CD8-positive, alpha-beta memory T cell (primary cell): ENCODE measurements at regions of chr11 and their contacts with region 1.

Region 1: DNA sequence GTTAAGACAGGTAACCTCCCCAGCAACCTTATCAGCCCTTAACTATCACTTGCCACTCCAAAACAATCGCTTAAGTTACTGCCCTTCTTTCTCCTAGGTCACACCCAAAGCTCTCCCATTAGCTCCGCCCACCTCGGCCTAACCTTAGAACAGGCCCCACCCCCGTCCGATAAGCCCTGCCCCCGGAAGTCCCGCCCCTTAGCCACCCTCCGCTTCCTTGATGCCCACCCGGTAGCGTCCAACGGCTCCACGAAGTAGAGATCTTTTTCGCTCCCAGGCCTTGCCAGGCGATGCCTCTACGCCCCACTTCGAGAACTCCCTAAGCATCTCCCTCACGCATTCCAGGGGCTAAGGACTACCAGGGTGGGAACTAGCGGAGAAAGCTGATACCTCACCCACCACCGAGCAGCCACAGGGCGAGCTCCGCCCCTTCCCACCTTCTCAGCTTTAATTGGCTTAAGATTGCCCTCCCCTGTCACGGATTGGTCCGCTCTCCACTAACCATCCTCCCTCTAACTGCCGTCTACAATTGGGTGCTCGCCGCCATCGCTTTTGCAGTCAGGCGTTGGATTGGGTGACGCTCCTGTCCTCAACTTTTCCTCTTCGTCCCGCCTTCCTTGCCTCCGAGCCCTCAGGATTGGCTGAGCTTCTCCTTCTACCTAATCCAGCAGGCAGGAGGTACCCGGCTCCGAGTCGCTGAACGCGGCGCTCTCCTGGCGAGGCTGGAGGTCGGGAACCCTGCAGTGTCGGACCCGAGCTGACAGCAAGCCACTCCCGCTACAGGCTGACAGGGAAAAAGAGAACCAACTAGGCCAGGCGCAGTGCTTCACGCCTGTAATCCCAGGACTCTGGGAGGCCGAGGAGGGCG is at the start of gene ZBTB3:
- DNase-seq: peak; percentile 95 to 99 (median 98)
- H3K4me3 ChIP-seq: peak within 1 kb of the TSS; percentile 99
- H3K4me3 Mint-ChIP-seq: peak within 1 kb of the TSS; percentile 91 to 100 (median 99)
- H3K27ac ChIP-seq: peak within 1 kb of the TSS; percentile 91
- H3K27ac Mint-ChIP-seq: peak within 1 kb of the TSS; percentile 83 to 99 (median 98)
- H3K4me1 ChIP-seq: peaks cover 22% of the 10 kb centered on the region
- H3K4me1 Mint-ChIP-seq: peaks cover 24 to 40% (median 33%) of the 10 kb centered on the region in 3 donors
- H3K27me3 ChIP-seq: no peaks in the 10 kb centered on the region
- H3K27me3 Mint-ChIP-seq: no peaks in the 10 kb centered on the region
- total RNA-seq, gene ZBTB3: 9.4 to 11.6 TPM

Region 2: GRCh38 chr11:62705880-62706849 is 47.8 kb before region 1 on chr11:
- CTCF ChIA-PET with region 1: interaction called, 6 read pairs
- POLR2A ChIA-PET with region 1: interaction called, 21 read pairs
- DNase-seq: peak; percentile 92 to 98 (median 95)
- H3K4me3 ChIP-seq: peak overlapping the region; percentile 88
- H3K4me3 Mint-ChIP-seq: peak overlapping the region; percentile 86 to 95 (median 89)
- H3K27ac ChIP-seq: peak overlapping the region; percentile 95
- H3K27ac Mint-ChIP-seq: peak overlapping the region; percentile 92 to 99 (median 94)
- H3K4me1 ChIP-seq: peaks cover 48% of the 10 kb centered on the region
- H3K4me1 Mint-ChIP-seq: peaks cover 36 to 49% (median 41%) of the 10 kb centered on the region in 3 donors
- H3K27me3 ChIP-seq: no peaks in the 10 kb centered on the region
- H3K27me3 Mint-ChIP-seq: no peaks in the 10 kb centered on the region

Region 3: DNA sequence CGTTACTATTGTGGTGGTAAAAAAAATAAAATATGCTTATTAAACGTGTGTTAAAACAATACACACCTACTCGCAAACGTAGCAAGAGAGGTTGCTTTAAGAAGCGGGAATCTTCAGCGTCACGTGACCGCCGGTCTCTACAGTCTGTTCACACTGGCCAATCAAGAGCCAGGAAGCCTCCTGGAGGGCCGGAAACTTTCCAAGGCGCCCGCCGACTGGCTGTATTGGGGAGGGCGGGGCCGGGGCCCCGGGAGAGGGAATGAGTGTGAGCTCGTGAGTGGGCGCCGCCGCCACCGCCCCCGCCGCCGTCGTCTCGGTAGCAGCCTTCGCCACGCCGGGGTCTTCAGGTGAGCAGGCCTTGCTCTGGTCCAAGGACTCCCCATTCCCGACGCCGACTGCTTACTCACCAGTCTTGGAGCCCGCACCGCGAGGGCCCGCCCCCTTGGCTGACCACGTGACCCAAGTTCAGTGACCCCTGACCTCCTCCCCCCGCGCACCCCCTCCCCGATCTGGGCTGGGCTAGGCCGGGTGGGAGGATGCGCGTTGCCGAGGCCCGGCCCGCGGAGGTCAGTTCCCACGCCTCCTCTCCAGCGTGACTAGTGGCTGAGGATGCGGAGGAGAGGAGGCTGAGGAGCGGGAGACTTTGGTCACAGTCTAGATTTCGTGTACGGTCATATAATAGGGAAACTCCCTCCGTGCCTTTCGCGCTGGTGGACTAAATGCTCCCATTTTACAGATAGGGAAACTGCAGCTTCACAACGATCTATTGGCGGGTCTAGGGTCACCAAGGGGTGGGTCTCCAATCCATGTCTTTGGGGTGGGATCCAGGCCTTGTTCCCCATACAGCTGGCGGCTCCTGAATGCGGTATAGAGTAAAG is 17.4 kb after region 1 on chr11 and contains the start of gene TAF6L:
- CTCF ChIA-PET with region 1: interaction called, 31 read pairs
- POLR2A ChIA-PET with region 1: interaction called, 31 read pairs
- DNase-seq: peak; percentile 83 to 93 (median 87)
- H3K4me3 ChIP-seq: peak within 1 kb of the TSS; percentile 42
- H3K4me3 Mint-ChIP-seq: peak within 1 kb of the TSS; percentile 87 to 96 (median 93)
- H3K27ac ChIP-seq: peak within 1 kb of the TSS; percentile 75
- H3K27ac Mint-ChIP-seq: peak within 1 kb of the TSS; percentile 85 to 99 (median 95)
- H3K4me1 ChIP-seq: peaks cover 22% of the 10 kb centered on the region
- H3K4me1 Mint-ChIP-seq: peaks cover 18 to 30% (median 28%) of the 10 kb centered on the region in 3 donors
- H3K27me3 ChIP-seq: no peaks in the 10 kb centered on the region
- H3K27me3 Mint-ChIP-seq: no peaks in the 10 kb centered on the region
- total RNA-seq, gene TAF6L: 21.8 to 24.1 TPM

Region 4: DNA sequence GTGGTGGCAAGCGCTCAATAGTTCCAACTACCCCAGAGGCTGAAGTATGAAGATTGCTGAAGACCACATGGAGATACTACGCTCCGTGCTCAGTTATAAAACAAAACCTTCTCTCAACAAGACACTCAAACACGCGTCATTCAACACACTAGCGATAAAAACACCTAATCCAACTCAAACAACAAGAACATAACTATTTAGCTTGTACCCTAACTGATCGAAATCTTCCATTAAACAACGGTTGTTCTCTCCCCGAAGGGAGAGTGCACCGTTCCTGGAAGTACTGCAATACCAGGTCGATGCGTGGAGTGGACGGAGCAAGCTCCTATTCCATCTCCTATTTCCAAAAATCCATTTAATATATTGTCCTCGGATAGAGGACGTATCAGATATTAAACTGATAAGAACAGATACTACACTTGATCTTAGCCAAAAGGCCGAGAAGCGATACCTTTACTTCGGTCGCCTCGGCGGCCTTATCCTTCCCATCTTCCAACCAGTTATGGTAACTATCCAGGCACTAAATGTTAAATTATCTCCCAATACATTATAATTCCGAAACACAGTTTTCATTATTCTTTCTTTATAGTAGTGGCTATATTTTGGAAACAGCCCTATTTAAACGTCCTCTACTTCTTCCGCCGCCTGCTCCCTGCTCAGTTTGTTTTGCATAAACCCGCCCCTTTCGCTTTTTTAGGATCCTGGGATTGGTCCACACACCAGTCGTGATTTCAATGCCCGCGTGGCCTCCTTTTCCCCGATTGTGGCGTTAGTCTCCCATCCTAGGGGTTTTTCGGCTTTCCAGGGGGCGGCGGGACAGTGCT is 87.6 kb after region 1 on chr11:
- CTCF ChIA-PET with region 1: interaction called, 4 read pairs
- POLR2A ChIA-PET with region 1: interaction called, 32 read pairs
- DNase-seq: peak; percentile 69 to 90 (median 88)
- H3K4me3 ChIP-seq: peak overlapping the region; percentile 67
- H3K4me3 Mint-ChIP-seq: no peak overlapping the region
- H3K27ac ChIP-seq: peak overlapping the region; percentile 98
- H3K27ac Mint-ChIP-seq: no peak overlapping the region
- H3K4me1 ChIP-seq: peaks cover 23% of the 10 kb centered on the region
- H3K4me1 Mint-ChIP-seq: peaks cover 22 to 28% (median 27%) of the 10 kb centered on the region in 3 donors
- H3K27me3 ChIP-seq: no peaks in the 10 kb centered on the region
- H3K27me3 Mint-ChIP-seq: peaks cover 0 to 1% of the 10 kb centered on the region in 2 donors

Region 5: DNA sequence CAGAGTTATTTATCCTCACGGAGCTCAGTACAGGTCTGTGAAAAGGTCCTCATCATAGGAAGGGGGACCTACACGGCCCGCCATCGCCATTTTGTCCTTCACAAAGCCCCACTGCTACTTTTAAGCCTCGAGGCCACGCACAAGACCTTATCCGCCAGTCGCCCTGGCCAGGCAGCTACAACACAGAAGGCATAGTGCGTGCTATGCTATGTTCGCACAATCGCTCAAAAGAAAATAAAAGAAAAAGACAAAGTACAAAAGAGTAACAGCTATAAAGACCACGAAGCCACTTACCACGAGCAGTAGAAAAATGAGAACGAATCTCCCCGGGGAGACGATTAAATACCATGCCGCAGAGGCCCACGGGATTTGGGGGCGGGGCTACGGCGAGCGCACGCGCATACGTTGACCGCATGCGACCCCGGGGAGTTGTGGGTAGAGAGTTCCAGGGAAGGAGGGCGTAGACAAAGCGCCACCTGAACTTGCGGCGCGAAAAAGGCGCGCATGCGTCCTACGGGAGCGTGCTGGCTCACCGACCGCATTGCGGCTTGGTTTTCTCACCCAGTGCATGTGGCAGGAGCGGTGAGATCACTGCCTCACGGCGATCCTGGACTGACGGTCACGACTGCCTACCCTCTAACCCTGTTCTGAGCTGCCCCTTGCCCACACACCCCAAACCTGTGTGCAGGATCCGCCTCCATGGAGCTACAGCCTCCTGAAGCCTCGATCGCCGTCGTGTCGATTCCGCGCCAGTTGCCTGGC is 101.8 kb after region 1 on chr11:
- CTCF ChIA-PET with region 1: interaction called, 5 read pairs
- POLR2A ChIA-PET with region 1: interaction called, 21 read pairs
- DNase-seq: peak; percentile 94 to 99 (median 98)
- H3K4me3 ChIP-seq: peak overlapping the region; percentile 98
- H3K4me3 Mint-ChIP-seq: peak overlapping the region; percentile 94 to 99 (median 98)
- H3K27ac ChIP-seq: peak overlapping the region; percentile 94
- H3K27ac Mint-ChIP-seq: peak overlapping the region; percentile 84 to 96 (median 94)
- H3K4me1 ChIP-seq: peaks cover 47% of the 10 kb centered on the region
- H3K4me1 Mint-ChIP-seq: peaks cover 46 to 63% (median 55%) of the 10 kb centered on the region in 3 donors
- H3K27me3 ChIP-seq: no peaks in the 10 kb centered on the region
- H3K27me3 Mint-ChIP-seq: peaks cover 0 to 6% of the 10 kb centered on the region in 2 donors